Heart right ventricle (tissue), 16 donors: ENCODE measurements at regions of chr20 and their contacts with region 1.

Region 1: DNA sequence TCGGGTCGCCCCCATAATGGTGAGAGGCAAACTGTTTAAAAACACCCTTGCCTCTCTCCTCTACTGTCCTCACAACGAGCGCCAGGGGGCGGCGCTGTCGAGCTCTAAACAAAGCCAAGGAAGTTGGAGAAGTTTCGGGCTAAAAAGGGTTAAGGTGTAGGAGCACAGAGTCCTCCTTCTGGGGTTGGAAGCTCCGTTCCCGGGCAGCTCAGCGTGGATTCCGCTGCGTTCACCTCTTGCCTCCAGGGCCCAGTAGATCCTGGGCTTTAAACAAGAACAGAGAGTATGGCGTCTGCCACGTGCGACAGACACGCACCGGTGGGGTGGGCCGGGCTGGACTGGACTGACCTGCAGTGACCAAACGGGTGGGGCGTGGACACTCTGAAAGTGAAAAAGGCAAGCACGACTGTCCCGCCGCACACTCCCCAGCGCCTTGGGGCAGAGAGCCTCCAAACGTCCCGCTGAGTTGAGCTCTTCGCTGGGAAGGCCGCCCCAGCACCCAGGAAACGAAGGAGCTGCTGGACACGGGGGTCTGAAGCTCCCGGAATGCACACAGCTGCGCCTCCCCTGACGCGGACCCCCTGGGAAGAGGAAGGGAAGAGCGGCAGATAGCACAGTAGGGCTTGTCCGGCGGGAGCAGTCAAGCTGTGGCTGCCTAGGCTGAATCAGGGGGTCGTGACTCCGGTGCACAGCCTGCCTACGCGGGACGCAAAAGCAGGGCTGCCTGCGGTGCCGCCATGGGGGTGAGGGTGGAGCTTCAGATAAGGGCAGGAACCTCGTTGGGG is 1.6 kb upstream of the THBD start:
- DNase-seq: peak; percentile 87 to 90
- ATAC-seq: peak; percentile 50 to 82 (median 67)
- H3K4me3 ChIP-seq: peak overlapping the region; percentile 50 to 82 (median 70)
- H3K27ac ChIP-seq: peak overlapping the region; percentile 87 to 97 (median 92)
- H3K4me1 ChIP-seq: peaks cover 6 to 59% (median 50%) of the 10 kb centered on the region in 9 donors
- H3K27me3 ChIP-seq: peaks cover 0 to 54% (median 25%) of the 10 kb centered on the region in 7 donors
- CTCF ChIP-seq: peak; percentile 55 to 87 (median 79)

Region 2: GRCh38 chr20:22691369-22692118 is 359.5 kb before region 1 on chr20:
- intact Hi-C with region 1: loop called in 6 of 10 experiments (anchors 5 to 10 kb)
- DNase-seq: peak; percentile 79 to 82
- ATAC-seq: peak; percentile 89 to 96 (median 94)
- H3K4me3 ChIP-seq: peak overlapping the region in 5 of 10 donors; percentile 11 to 33 (median 24)
- H3K27ac ChIP-seq: peak overlapping the region in 9 of 10 donors; percentile 8 to 80 (median 43)
- H3K4me1 ChIP-seq: peaks cover 0 to 32% (median 16%) of the 10 kb centered on the region in 9 donors
- H3K27me3 ChIP-seq: no peaks in the 10 kb centered on the region
- CTCF ChIP-seq: peak; percentile 85 to 95 (median 94)

Region 3: DNA sequence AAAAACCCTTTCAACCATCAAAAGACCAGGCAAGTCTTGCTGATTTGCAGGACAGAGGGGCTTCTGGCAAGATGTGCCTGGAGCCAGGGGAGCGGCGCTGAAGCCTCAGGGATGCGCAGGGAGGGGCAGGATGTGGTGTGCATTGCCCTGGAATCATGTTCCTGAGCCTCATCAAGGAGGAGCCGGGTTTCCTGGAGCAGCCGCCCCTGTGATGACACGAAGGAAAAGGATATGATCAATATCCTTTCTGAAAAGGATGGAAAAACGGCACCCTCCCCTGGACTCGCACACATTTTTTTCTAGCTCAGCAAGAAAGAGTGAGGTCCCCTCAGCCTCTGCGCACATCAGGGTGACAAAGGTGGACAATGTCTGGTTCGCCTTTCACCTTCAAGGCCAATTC is 189.0 kb before region 1 on chr20:
- intact Hi-C with region 1: loop called in 4 of 10 experiments (anchors 5 to 10 kb)
- DNase-seq: peak; percentile 43 to 68
- ATAC-seq: peak; percentile 75 to 93 (median 84)
- H3K4me3 ChIP-seq: no peak overlapping the region
- H3K27ac ChIP-seq: peak overlapping the region in 9 of 10 donors; percentile 39 to 85 (median 71)
- H3K4me1 ChIP-seq: peaks cover 0 to 35% (median 5%) of the 10 kb centered on the region in 9 donors
- H3K27me3 ChIP-seq: peaks cover 0 to 6% (median 0%) of the 10 kb centered on the region in 7 donors
- CTCF ChIP-seq: no peak

Region 4: DNA sequence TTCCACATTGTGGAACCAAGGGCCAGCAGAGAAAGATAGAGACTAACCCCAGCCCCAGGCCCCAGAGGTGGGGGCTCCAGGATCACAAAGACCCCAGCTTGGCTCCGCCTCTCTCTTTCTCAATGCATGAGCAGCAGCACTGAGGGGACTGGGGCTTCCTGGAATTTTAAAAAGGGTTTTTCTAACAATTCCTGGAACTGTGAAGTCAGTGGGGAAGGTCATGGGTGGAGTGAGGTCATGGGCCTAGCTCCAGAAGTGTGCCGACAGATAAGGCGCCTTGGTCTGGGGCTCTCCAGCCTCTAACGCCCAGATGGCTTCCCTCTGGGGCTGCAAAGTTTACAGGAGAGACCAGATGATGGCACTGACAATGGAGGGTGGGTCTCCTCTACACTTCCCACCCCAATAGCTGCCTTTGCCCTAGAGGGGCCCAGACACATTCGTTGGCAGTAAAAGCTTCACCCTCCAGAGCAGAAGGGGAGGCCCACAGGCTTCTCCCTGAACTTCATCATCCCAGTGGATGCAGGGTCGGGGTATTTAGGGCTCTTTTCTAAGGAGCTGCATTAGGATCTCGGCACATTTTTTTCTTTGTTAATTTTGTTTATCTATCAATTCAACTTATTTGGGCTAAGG is 82.0 kb after region 1 on chr20:
- intact Hi-C with region 1: loop called in 2 of 10 experiments (anchors 2 to 10 kb)
- DNase-seq: peak; percentile 65 to 80
- ATAC-seq: peak; percentile 72 to 94 (median 84)
- H3K4me3 ChIP-seq: no peak overlapping the region
- H3K27ac ChIP-seq: peak overlapping the region; percentile 9 to 88 (median 76)
- H3K4me1 ChIP-seq: peaks cover 2 to 79% (median 52%) of the 10 kb centered on the region in 9 donors
- H3K27me3 ChIP-seq: no peaks in the 10 kb centered on the region
- CTCF ChIP-seq: no peak

Region 5: GRCh38 chr20:23225407-23226072 is 174.5 kb after region 1 on chr20:
- intact Hi-C with region 1: loop called in 4 of 10 experiments (anchors 5 to 10 kb)
- DNase-seq: no peak
- ATAC-seq: peak in 7 of 8 donors; percentile 26 to 86 (median 59)
- H3K4me3 ChIP-seq: no peak overlapping the region
- H3K27ac ChIP-seq: peak overlapping the region in 1 of 10 donors; percentile 24
- H3K4me1 ChIP-seq: peaks cover 0 to 30% (median 9%) of the 10 kb centered on the region in 9 donors
- H3K27me3 ChIP-seq: peaks cover 0 to 4% (median 0%) of the 10 kb centered on the region in 7 donors
- CTCF ChIP-seq: no peak

Region 6: GRCh38 chr20:23331450-23332350 is 280.7 kb after region 1 on chr20:
- intact Hi-C with region 1: loop called in 3 of 10 experiments (anchors 10 kb)
- DNase-seq: no peak
- ATAC-seq: peak in 1 of 8 donors; percentile 28
- H3K4me3 ChIP-seq: no peak overlapping the region
- H3K27ac ChIP-seq: peak overlapping the region in 1 of 10 donors; percentile 36
- H3K4me1 ChIP-seq: peaks cover 0 to 13% (median 7%) of the 10 kb centered on the region in 9 donors
- H3K27me3 ChIP-seq: no peaks in the 10 kb centered on the region
- CTCF ChIP-seq: no peak